ENCODE measurements at regions of chr6 and their contacts with region 1.

Region 1: GRCh38 chr6:121573481-121573880 is 138.0 kb downstream of the GJA1 start:
- DNase-seq: no peak
- H3K4me3 ChIP-seq: no peak overlapping the region
- H3K27ac ChIP-seq: no peak overlapping the region
- H3K4me1 ChIP-seq: no peaks in the 10 kb centered on the region
- H3K27me3 ChIP-seq: no peaks in the 10 kb centered on the region
- CTCF ChIP-seq: no peak

Region 2: DNA sequence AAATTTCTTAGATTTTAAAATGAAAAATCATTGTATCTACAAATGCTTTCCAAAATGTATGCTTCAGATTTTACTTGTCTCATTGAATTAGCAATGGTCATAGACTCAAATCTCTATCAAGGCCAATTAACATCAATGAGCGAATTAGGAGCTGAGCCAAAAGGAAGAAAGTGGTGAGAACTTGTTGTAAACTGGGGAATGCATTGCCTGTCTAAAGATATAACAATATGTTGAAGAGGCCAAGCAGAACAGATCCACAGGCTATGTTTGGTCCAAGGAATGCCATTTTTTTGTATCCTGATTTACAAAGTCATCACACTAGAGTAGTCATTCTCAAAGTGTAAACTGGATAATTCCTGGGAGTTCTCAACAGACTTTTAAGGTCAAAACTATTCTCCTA is 232.6 kb after region 1 on chr6:
- CTCF ChIA-PET with region 1: no interaction called
- POLR2A ChIA-PET with region 1: interaction called, 11 read pairs
- intact Hi-C with region 1: no loop called
- DNase-seq: no peak
- H3K4me3 ChIP-seq: no peak overlapping the region
- H3K27ac ChIP-seq: no peak overlapping the region
- H3K4me1 ChIP-seq: no peaks in the 10 kb centered on the region
- H3K27me3 ChIP-seq: no peaks in the 10 kb centered on the region
- CTCF ChIP-seq: no peak